ENCODE measurements at regions of chr17 and their contacts with region 1.

Region 1: GRCh38 chr17:4939796-4940624 is at the starts of genes RNF167 and SLC25A11:
- DNase-seq: peak; percentile 98
- H3K4me3 Mint-ChIP-seq: peak within 1 kb of the TSS; percentile 96
- H3K27ac Mint-ChIP-seq: peak within 1 kb of the TSS; percentile 100
- H3K4me1 Mint-ChIP-seq: peaks cover 61% of the 10 kb centered on the region
- H3K27me3 Mint-ChIP-seq: no peaks in the 10 kb centered on the region
- total RNA-seq, gene RNF167: 249 to 261 TPM
- total RNA-seq, gene SLC25A11: 62.8 to 71.0 TPM

Region 2: DNA sequence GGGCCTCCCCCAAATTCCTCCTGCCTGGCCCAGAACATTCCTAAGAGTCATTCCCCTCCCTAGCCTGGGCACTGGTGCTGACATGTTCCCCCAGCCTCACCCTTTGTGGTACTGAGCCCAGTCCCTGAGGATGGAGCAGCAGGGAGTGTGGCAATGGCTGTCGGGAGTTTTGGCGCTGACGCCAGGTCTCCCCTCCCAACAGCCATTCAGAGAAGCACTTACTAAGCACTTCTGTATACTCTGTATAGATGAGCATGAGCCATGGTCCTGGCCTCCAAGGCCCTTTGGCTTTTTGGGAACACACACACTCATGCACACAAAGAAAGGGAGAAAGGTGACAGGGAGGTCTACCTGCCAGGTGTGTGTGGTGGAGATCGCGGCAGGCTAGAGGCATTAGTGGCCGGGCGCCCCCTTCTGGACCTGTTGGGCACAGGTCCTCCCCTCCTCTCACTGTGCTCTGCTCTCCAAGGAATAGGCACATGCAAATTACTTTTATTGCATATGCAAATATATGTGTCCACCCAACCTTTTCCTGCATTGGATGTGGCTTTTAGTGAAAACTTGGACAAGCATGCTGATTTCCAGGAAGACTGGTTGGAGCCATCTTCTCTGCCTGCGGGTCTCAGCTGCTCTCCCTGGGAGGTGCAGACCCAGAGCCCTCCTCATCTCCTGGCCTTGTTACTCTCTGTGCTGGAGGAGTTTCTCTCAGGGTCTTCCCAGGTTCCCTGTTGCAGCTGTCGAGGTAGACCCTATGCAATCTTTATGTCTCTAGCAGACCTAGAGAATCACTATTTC is 58.1 kb before region 1 on chr17:
- CTCF ChIA-PET with region 1: no interaction called
- POLR2A ChIA-PET with region 1: no interaction called
- DNase-seq: peak; percentile 66
- H3K4me3 Mint-ChIP-seq: no peak overlapping the region
- H3K27ac Mint-ChIP-seq: no peak overlapping the region
- H3K4me1 Mint-ChIP-seq: no peaks in the 10 kb centered on the region
- H3K27me3 Mint-ChIP-seq: no peaks in the 10 kb centered on the region

Region 3: DNA sequence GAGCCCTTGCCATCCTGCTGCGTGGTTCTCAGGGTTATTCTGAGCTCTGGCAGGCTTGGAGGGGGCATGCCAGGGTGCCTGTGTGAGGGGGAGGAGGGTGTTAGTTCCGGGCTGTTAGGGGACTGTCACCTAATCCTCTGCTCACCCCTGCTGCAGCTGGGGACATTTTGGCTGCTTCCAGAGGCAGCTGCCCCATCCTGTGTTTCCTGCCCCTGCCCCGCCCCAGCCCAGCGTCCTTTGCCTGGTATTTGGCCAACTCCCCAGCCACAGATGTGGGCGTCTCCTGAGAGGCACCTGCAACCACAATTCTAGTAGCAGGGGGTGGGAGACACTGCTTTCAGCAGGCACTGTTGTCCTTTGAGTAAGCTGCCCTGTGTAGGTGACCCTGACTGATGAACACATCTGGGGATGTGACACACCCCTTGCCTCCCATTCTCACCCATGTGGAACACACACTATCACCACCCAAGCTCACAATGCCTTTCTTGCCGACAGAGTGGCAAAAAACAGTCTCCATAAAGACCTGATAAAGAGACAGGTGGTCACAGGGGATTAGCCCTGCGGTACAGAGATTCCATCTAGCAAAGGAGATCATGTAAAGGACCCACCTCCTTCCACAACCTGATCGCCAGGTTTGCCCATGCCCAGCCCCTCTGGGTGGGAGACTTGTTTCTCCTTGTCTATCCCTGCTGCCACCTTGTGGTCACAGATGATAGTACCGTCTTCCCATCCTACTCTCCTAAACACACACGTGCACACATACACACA is 36.8 kb before region 1 on chr17 and contains the start of gene CHRNE:
- CTCF ChIA-PET with region 1: interaction called, 4 read pairs
- POLR2A ChIA-PET with region 1: interaction called, 14 read pairs
- DNase-seq: peak; percentile 81
- H3K4me3 Mint-ChIP-seq: peak within 1 kb of the TSS; percentile 2
- H3K27ac Mint-ChIP-seq: peak within 1 kb of the TSS; percentile 8
- H3K4me1 Mint-ChIP-seq: peaks cover 40% of the 10 kb centered on the region
- H3K27me3 Mint-ChIP-seq: peaks cover 11% of the 10 kb centered on the region
- total RNA-seq, gene CHRNE: 0.33 to 0.43 TPM

Region 4: GRCh38 chr17:4908301-4908700 is 31.7 kb before region 1 on chr17:
- CTCF ChIA-PET with region 1: interaction called, 29 read pairs
- POLR2A ChIA-PET with region 1: interaction called, 14 read pairs
- DNase-seq: no peak
- H3K4me3 Mint-ChIP-seq: no peak overlapping the region
- H3K27ac Mint-ChIP-seq: no peak overlapping the region
- H3K4me1 Mint-ChIP-seq: peaks cover 7% of the 10 kb centered on the region
- H3K27me3 Mint-ChIP-seq: peaks cover 13% of the 10 kb centered on the region

Region 5: GRCh38 chr17:4920351-4921048 is 19.5 kb before region 1 on chr17:
- CTCF ChIA-PET with region 1: interaction called, 7 read pairs
- POLR2A ChIA-PET with region 1: interaction called, 26 read pairs
- DNase-seq: no peak
- H3K4me3 Mint-ChIP-seq: no peak overlapping the region
- H3K27ac Mint-ChIP-seq: no peak overlapping the region
- H3K4me1 Mint-ChIP-seq: no peaks in the 10 kb centered on the region
- H3K27me3 Mint-ChIP-seq: peaks cover 2% of the 10 kb centered on the region

Region 6: DNA sequence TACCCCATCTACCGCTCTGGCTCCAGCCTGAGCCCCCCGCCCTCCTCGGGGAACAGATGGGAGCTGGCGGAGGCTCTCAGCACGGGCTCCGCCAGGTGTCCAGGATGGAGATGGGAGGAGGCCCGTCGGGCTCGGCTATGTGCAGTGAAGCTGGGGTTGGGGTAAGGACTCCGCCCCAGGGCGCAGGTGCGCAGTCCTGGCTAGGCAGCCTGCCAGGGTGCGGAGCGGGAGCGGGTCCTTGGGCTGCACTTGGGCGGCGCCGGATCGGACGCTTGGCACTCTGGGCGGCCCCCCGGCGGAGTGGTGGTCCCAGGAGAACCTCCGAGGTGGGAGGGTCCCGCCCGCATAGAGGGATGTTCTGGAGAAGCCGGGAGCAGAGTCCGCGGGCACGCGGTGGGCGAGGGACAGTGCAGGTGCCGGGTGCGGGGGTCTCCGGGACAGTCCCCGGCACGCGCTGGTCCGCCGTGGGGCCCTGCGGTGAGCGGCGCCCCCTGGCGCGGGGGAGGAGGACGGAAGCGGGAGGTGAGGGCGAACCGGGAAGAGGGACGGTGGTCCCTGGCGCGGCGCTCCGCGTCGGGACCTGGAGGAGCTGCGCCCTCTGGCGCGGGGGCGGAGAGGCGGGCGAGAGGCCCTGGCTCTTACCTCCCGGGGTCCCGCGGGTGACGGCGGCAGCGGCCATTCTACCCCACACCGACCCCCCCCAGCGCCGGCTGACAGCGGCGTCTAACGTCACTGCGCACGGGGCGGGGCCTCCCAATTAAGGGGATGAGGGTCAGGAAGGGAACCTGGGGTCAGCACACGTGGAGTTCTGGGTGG is 47.1 kb after region 1 on chr17 and contains the start of gene CAMTA2:
- CTCF ChIA-PET with region 1: interaction called, 7 read pairs
- POLR2A ChIA-PET with region 1: interaction called, 122 read pairs
- DNase-seq: peak; percentile 89
- H3K4me3 Mint-ChIP-seq: peak within 1 kb of the TSS; percentile 88
- H3K27ac Mint-ChIP-seq: peak within 1 kb of the TSS; percentile 88
- H3K4me1 Mint-ChIP-seq: peaks cover 40% of the 10 kb centered on the region
- H3K27me3 Mint-ChIP-seq: no peaks in the 10 kb centered on the region
- total RNA-seq, gene CAMTA2: 73.2 to 80.1 TPM